ENCODE measurements at regions of chr11 and their contacts with region 1.

Region 1: DNA sequence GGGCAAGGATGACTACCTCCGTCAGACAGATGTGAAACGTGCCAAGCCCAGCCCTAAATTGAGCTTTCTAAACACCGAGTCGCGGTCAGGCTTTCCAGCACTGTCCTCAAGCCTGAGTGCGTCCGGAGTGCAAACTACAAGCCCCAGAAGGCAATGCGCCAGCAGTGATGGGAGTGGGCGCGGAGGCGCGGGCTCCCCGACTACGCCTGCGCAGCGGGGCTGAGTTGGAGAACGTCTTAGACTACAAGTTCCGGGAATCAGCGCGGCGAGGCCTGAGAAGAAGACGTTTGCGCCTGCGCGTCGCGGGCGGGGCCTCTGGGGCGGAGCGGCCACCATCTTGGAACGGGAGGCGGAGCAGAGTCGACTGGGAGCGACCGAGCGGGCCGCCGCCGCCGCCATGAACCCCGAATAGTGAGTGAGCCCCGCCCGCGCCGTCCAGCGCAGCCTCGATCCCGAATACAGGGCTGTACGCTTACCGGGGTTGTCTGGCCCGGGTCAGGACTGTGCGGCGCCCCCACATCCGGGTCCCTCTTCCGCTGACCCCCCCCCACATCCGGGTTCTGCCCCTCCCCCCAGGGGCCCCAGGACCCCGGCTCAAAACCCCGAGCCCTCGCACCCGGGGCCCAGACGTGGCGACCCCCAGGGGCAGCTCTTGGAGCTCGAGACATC is at the start of gene RAB1B:
- DNase-seq: peak; percentile 99 to 100 (median 99)
- ATAC-seq: peak; percentile 89
- H3K4me3 ChIP-seq: peak within 1 kb of the TSS; percentile 91
- H3K4me3 Mint-ChIP-seq: peak within 1 kb of the TSS; percentile 88 to 100 (median 95)
- H3K27ac ChIP-seq: peak within 1 kb of the TSS; percentile 90
- H3K27ac Mint-ChIP-seq: peak within 1 kb of the TSS; percentile 95 to 99 (median 97)
- H3K4me1 ChIP-seq: peaks cover 16 to 38% of the 10 kb centered on the region in 2 donors
- H3K4me1 Mint-ChIP-seq: peaks cover 26 to 48% (median 34%) of the 10 kb centered on the region in 7 donors
- H3K27me3 ChIP-seq: no peaks in the 10 kb centered on the region
- H3K27me3 Mint-ChIP-seq: peaks cover 0 to 3% (median 0%) of the 10 kb centered on the region in 5 donors
- total RNA-seq, gene RAB1B: 60.6 to 151 (median 70.7) TPM

Region 2: DNA sequence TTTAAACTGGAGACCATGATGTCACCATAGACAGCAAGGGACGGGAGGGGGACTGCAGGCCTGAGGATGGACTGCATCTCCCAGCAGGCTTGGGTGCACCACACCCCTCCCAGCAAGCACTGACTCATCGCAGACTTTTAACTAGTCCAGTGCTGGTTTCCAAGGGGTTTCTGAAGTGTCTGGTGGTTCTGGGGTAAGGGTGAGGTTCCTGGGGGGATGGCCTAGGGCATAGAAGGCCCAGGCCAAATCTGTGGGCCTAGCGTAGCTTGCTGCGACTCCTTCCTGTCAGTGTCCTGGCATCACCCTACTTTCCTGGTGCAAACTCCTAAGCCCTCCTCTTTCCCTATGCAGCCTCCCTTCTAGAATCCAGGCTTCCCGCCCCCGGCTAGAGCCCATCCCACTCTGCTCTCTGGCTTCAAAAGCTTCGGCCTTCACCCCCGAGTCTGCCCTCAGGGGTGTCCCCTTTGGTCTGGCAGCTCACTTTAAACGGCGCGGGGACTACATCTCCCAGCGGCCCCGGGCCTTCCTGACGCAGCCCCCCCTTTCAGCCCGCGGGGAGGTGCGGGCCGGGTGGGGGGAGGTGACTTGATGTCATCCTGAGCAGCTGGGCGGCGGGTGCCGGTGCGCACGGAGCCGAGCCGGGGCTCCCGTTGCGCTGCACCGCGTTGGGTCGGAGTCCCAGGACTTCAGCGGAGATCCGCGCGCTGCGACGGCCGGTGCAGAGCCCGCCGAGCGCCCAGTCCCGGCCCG is 1344.1 kb before region 1 on chr11 and contains the start of gene PPP2R5B:
- CTCF ChIA-PET with region 1: no interaction called
- POLR2A ChIA-PET with region 1: no interaction called
- intact Hi-C with region 1: loop called in 1 of 2 experiments (anchors 5 kb)
- DNase-seq: peak; percentile 79 to 92 (median 89)
- ATAC-seq: peak; percentile 95
- H3K4me3 ChIP-seq: peak within 1 kb of the TSS; percentile 67
- H3K4me3 Mint-ChIP-seq: peak within 1 kb of the TSS; percentile 89 to 99 (median 96)
- H3K27ac ChIP-seq: peak within 1 kb of the TSS; percentile 81
- H3K27ac Mint-ChIP-seq: peak within 1 kb of the TSS; percentile 95 to 100 (median 98)
- H3K4me1 ChIP-seq: peaks cover 11 to 15% of the 10 kb centered on the region in 2 donors
- H3K4me1 Mint-ChIP-seq: peaks cover 9 to 24% (median 14%) of the 10 kb centered on the region in 7 donors
- H3K27me3 ChIP-seq: no peaks in the 10 kb centered on the region
- H3K27me3 Mint-ChIP-seq: no peaks in the 10 kb centered on the region
- total RNA-seq, gene PPP2R5B: 11.9 to 19.1 (median 18.8) TPM

Region 3: GRCh38 chr11:65919146-65920033 is 349.0 kb before region 1 on chr11 and contains the start of gene DRAP1:
- CTCF ChIA-PET with region 1: no interaction called
- POLR2A ChIA-PET with region 1: no interaction called
- intact Hi-C with region 1: loop called in 1 of 2 experiments (anchors 1 kb)
- DNase-seq: peak; percentile 95 to 98 (median 97)
- ATAC-seq: peak; percentile 93
- H3K4me3 ChIP-seq: peak within 1 kb of the TSS; percentile 83
- H3K4me3 Mint-ChIP-seq: peak within 1 kb of the TSS; percentile 86 to 96 (median 93)
- H3K27ac ChIP-seq: peak within 1 kb of the TSS; percentile 95
- H3K27ac Mint-ChIP-seq: peak within 1 kb of the TSS; percentile 79 to 96 (median 90)
- H3K4me1 ChIP-seq: peaks cover 26 to 28% of the 10 kb centered on the region in 2 donors
- H3K4me1 Mint-ChIP-seq: peaks cover 32 to 61% (median 36%) of the 10 kb centered on the region in 7 donors
- H3K27me3 ChIP-seq: no peaks in the 10 kb centered on the region
- H3K27me3 Mint-ChIP-seq: no peaks in the 10 kb centered on the region
- total RNA-seq, gene DRAP1: 72.6 to 166 (median 81.9) TPM

Region 4: DNA sequence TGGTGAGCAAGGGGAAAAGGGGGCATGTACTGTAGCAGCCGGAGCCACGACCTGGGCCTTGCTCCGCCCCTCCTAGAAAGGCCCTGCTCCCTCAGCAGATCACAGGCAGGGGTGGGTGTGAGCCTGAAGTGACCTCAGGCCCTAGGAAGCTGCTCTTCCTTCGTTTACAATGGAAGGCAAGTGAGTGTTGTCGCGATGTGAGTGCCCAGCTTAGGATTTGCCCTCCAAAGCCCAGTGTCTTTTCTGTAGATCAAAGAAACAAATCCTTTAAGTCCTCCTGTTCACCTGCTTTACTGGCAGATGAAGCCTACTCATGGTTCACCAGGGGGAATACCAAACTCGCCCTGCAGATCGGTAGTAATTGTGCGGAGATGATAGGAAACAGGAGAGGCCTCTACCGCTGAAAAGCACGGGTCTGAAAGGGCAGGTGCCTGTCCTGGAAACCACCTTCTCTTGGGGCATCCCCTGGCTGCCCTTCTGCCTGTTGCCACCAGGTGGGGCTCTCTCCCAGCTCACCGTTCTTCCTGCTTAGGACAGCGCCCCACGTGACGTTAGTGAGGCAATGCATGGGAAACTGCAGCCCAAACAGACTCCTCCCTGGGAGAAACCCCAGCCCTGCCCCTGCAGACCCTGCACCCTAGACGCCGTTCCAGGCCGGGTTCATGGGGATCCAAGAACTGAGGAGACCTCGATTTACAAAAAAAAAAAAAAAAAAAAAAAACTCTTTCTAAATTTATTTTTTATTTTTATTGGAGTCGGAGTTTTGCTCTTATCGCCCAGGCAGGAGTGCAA is 45.9 kb before region 1 on chr11:
- CTCF ChIA-PET with region 1: interaction called, 4 read pairs
- POLR2A ChIA-PET with region 1: interaction called, 3 read pairs
- intact Hi-C with region 1: loop called (anchors 2 kb)
- DNase-seq: peak; percentile 79 to 95 (median 92)
- ATAC-seq: peak; percentile 100
- H3K4me3 ChIP-seq: no peak overlapping the region
- H3K4me3 Mint-ChIP-seq: peak overlapping the region in 4 of 10 donors; percentile 26 to 35 (median 32)
- H3K27ac ChIP-seq: peak overlapping the region; percentile 89
- H3K27ac Mint-ChIP-seq: peak overlapping the region; percentile 78 to 98 (median 92)
- H3K4me1 ChIP-seq: peaks cover 4 to 7% of the 10 kb centered on the region in 2 donors
- H3K4me1 Mint-ChIP-seq: peaks cover 12 to 21% (median 18%) of the 10 kb centered on the region in 7 donors
- H3K27me3 ChIP-seq: no peaks in the 10 kb centered on the region
- H3K27me3 Mint-ChIP-seq: no peaks in the 10 kb centered on the region

Region 5: DNA sequence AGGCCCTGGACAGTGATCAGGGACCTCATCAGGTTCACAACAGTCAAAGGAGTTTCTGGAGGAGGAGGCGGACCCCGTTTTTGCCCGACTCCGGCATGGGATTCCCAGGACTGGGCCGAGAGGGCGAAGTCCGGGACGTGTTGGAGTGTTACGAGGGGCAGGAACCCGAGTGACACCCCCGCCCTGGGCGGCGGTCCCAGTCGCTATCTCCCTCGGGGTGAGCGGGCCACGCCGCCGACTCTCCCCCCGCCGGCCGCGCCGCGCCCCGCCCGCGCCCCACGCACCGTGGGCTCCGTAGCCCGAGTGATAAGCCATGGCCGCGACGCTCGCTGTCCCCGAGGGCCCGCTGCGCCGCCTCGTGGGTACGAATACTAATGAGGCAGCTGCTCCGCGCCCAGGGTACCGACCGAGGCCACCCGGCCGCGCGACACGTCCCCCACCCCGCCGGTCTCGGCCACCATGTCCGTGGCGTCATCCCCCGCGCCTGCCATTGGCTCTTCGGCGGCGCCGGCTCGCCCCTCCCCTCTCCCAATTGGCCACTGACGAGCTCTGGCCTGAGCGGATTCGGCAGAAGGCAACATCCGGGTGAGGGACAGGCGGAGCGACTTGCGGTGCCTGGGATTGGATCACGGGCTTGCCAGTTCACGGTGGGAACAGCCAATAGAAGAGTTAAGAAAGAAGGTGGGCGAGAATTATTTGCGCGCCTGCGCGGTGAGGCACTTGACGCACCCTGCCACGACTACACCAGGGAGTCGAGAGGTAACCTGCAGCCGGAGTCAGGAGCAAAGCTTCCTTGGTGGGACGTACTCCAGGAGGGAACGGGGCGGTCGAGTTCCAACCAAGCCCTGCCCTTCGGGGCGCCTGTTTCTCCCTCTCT is 20.5 kb after region 1 on chr11 and contains the start of gene YIF1A:
- CTCF ChIA-PET with region 1: interaction called, 3 read pairs
- POLR2A ChIA-PET with region 1: interaction called, 28 read pairs
- intact Hi-C with region 1: loop called (anchors 1 kb)
- DNase-seq: peak; percentile 92 to 99 (median 99)
- ATAC-seq: peak; percentile 96
- H3K4me3 ChIP-seq: peak within 1 kb of the TSS; percentile 99
- H3K4me3 Mint-ChIP-seq: peak within 1 kb of the TSS; percentile 86 to 96 (median 90)
- H3K27ac ChIP-seq: peak within 1 kb of the TSS; percentile 76
- H3K27ac Mint-ChIP-seq: peak within 1 kb of the TSS; percentile 74 to 97 (median 92)
- H3K4me1 ChIP-seq: peaks cover 18 to 19% of the 10 kb centered on the region in 2 donors
- H3K4me1 Mint-ChIP-seq: peaks cover 17 to 46% (median 37%) of the 10 kb centered on the region in 7 donors
- H3K27me3 ChIP-seq: peaks cover 0 to 7% of the 10 kb centered on the region in 2 donors
- H3K27me3 Mint-ChIP-seq: peaks cover 13 to 35% (median 13%) of the 10 kb centered on the region in 5 donors
- total RNA-seq, gene YIF1A: 25.0 to 66.2 (median 33.3) TPM